ENCODE measurements at regions of chr5 and their contacts with region 1.

Region 1: DNA sequence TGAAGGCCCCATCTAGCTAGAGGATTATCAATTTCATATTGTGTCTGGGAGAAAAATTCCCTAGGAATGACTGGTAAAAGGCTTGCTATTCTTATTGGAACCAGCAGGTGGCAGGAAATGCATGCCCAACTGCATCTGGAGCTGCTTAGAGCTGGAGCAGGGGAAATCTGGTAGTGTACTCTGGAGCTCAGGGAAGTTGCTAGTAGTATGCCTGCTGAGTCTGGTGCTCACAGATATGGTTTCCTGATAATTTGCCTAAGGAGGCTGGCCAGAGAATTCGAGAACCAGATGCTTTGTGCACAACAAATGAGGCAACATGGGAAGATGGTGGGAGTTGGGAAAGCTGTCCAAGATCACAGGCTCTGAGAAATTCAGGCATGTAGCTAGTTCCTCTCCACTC is 53.7 kb downstream of the G3BP1 start:
- DNase-seq: no peak
- H3K4me3 Mint-ChIP-seq: no peak overlapping the region
- H3K27ac Mint-ChIP-seq: no peak overlapping the region
- H3K4me1 Mint-ChIP-seq: no peaks in the 10 kb centered on the region
- H3K27me3 Mint-ChIP-seq: no peaks in the 10 kb centered on the region

Region 2: GRCh38 chr5:152142840-152143469 is 317.5 kb after region 1 on chr5:
- intact Hi-C with region 1: loop called (anchors 1 kb)
- DNase-seq: peak; percentile 21
- H3K4me3 Mint-ChIP-seq: no peak overlapping the region
- H3K27ac Mint-ChIP-seq: no peak overlapping the region
- H3K4me1 Mint-ChIP-seq: no peaks in the 10 kb centered on the region
- H3K27me3 Mint-ChIP-seq: peaks cover 2% of the 10 kb centered on the region

Region 3: GRCh38 chr5:152314196-152314829 is 488.9 kb after region 1 on chr5:
- intact Hi-C with region 1: no loop called
- DNase-seq: no peak
- H3K4me3 Mint-ChIP-seq: no peak overlapping the region
- H3K27ac Mint-ChIP-seq: no peak overlapping the region
- H3K4me1 Mint-ChIP-seq: no peaks in the 10 kb centered on the region
- H3K27me3 Mint-ChIP-seq: no peaks in the 10 kb centered on the region

Region 4: GRCh38 chr5:152505442-152506042 is 680.1 kb after region 1 on chr5:
- intact Hi-C with region 1: loop called (anchors 2 kb)
- DNase-seq: no peak
- H3K4me3 Mint-ChIP-seq: no peak overlapping the region
- H3K27ac Mint-ChIP-seq: no peak overlapping the region
- H3K4me1 Mint-ChIP-seq: no peaks in the 10 kb centered on the region
- H3K27me3 Mint-ChIP-seq: peaks cover 5% of the 10 kb centered on the region

Measured in activated T-helper 1 cell treated with anti-CD3 and anti-CD28 coated beads, Interleukin-12 subunit alpha, Interleukin-12 subunit beta, Interleukin-2, Interleukin-4 antibody, amounts not matched to agents 30 ng/mL and 10 ng/mL and 1 ng/mL, durations not matched to agents 14 hours and 24 hours and 36 hours (primary cell).